ENCODE measurements at regions of chr13 and their contacts with region 1.

Region 1: GRCh38 chr13:102870677-102871415 is 25.0 kb downstream of the ERCC5 start:
- DNase-seq: peak; percentile 11
- H3K4me3 ChIP-seq: no peak overlapping the region
- H3K27me3 ChIP-seq: no peaks in the 10 kb centered on the region
- CTCF ChIP-seq: peak; percentile 78

Region 2: DNA sequence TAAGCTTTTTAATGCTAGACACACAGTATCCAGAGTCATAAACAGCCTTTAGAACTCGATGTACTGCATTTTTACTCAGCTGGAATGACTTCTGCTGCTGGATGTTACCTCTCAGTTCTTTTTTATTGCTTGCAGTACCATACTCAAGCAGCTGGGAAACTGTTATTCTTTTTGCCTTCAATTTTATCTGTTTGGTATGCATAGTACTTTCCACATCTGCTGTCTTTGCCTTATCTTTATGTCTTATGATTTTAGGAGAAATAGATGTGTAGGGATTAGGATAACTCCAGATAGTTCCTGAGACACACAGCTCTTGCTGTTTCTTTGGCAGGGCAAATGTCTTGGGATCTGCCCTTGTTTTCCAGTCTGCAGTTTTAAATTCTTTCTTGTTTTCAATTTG is 128.7 kb before region 1 on chr13:
- CTCF ChIA-PET with region 1: no interaction called
- POLR2A ChIA-PET with region 1: no interaction called
- DNase-seq: no peak
- H3K4me3 ChIP-seq: no peak overlapping the region
- H3K27me3 ChIP-seq: no peaks in the 10 kb centered on the region; the same call in none of the 2 replicates
- CTCF ChIP-seq: no peak

Region 3: GRCh38 chr13:102854675-102855074 is 16.2 kb before region 1 on chr13:
- CTCF ChIA-PET with region 1: interaction called, 17 read pairs
- POLR2A ChIA-PET with region 1: no interaction called
- DNase-seq: no peak
- H3K4me3 ChIP-seq: no peak overlapping the region
- H3K27me3 ChIP-seq: no peaks in the 10 kb centered on the region
- CTCF ChIP-seq: no peak

Measured in BJ (cell line).